ENCODE measurements at regions of chr15 and their contacts with region 1.

Region 1: DNA sequence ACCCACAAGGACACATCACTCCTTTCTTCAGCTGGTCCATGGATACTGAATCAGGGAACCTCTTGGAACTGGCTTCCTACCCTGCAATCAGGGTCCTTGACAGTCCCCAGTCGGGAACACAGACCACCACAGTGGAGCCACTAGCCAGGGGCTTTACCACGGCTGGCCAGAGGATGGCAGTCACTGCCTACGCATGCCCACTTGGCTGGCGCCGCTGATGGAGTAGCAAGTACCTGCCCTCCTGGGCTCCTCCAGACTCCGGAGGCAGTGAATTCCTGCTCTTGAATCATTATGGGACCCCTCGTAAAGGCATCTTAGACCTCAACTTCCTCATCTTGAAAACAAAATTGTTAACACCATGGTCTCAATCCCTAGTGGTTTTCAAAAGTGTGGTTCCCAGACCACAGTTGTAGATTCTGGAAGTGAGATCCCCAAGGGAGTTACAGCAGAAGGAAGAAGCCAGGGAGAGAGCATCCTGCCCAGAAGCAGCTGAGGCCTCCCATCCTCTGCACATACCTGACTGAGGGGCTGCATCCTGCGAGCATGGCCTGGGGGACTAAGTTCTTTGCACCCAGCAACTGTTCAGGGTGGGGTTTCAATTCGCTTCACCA is 9.1 kb upstream of the SKIC8 start:
- DNase-seq: peak; percentile 60 to 86 (median 80)
- H3K4me3 ChIP-seq: no peak overlapping the region
- H3K27ac ChIP-seq: no peak overlapping the region
- H3K4me1 ChIP-seq: no peaks in the 10 kb centered on the region
- H3K27me3 ChIP-seq: no peaks in the 10 kb centered on the region
- CTCF ChIP-seq: peak; percentile 63 to 92 (median 81)
- POLR2A ChIP-seq: no peak

Region 2: DNA sequence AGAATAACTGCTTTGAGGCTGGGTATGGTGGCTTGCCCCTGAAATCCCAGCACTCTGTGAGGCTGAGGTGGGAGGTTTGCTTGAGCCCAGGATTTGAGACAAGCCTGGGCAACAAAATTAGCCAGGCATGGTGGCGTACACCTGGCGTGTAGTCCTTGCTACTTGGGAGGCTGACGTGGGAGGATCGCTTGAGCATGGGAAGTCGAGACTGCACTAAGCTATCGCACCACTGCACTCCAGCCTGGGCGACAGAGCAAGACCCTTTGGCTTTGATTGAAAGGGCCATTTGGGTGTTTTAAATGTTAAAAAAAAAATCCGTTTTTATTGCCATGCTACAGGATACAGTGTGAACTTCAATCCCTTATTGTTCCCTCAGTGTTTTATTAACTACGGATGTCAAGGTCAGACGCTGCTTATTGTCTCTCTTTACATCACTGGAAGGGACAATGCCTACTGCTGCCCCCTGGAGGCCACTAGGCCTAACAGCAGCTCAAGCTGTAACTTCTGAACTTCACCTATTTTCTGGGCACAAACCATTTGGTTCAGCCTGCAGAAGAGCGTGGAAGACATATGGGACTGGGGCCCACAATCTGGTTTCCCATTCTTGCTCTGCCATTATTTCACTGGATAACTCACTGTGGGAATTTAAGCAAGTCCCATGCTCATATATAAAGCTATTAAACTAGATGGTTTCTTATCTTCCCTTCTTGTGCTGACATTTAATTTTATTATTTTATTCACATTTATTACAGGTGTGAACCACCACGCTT is 114.2 kb after region 1 on chr15:
- intact Hi-C with region 1: loop called (anchors 5 kb)
- DNase-seq: peak; percentile 60 to 87 (median 76)
- H3K4me3 ChIP-seq: no peak overlapping the region
- H3K27ac ChIP-seq: no peak overlapping the region
- H3K4me1 ChIP-seq: no peaks in the 10 kb centered on the region
- H3K27me3 ChIP-seq: peaks cover 5% of the 10 kb centered on the region
- CTCF ChIP-seq: peak; percentile 85 to 95 (median 87)
- POLR2A ChIP-seq: no peak

Measured in adrenal gland (tissue), 19 donors.